SK-N-SH (cell line): ENCODE measurements at regions of chr4 and their contacts with region 1.

Region 1: GRCh38 chr4:57460967-57461366 is 350.8 kb upstream of the IGFBP7 start:
- DNase-seq: no peak
- H3K4me3 ChIP-seq: no peak overlapping the region
- H3K27ac ChIP-seq: no peak overlapping the region
- H3K4me1 ChIP-seq: no peaks in the 10 kb centered on the region
- H3K27me3 ChIP-seq: no peaks in the 10 kb centered on the region
- CTCF ChIP-seq: no peak
- EP300 ChIP-seq: no peak
- RAD21 ChIP-seq: no peak

Region 2: GRCh38 chr4:57254754-57255153 is 206.2 kb before region 1 on chr4:
- CTCF ChIA-PET with region 1: no interaction called
- POLR2A ChIA-PET with region 1: no interaction called
- DNase-seq: no peak
- H3K4me3 ChIP-seq: no peak overlapping the region
- H3K27ac ChIP-seq: no peak overlapping the region
- H3K4me1 ChIP-seq: no peaks in the 10 kb centered on the region
- H3K27me3 ChIP-seq: no peaks in the 10 kb centered on the region
- CTCF ChIP-seq: no peak
- EP300 ChIP-seq: no peak
- RAD21 ChIP-seq: no peak

Region 3: DNA sequence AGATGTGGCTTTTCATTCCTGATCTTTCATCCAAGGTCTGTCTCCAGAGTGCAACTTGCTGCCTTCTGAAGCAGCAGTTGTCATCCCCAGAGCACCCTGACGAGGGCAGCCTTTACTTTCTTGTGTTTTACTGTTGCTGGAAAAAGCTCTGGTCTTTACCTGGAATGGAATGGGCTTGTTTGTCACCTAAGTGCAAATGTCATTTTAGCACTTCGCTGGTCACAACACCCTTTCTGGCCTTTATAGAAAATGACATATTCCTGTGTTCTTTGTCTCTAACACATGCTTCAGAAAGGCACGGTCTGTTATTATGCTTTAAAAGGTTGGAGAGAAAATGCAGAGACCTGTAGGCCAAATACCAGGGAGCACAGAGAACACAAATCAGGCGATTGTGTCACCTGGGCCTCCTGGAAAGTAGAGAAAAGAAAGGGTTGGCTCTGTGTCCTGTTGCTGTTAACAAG is 18.1 kb before region 1 on chr4:
- CTCF ChIA-PET with region 1: interaction called, 15 read pairs
- POLR2A ChIA-PET with region 1: no interaction called
- DNase-seq: peak; percentile 54
- H3K4me3 ChIP-seq: peak overlapping the region in 1 of 2 experiments; percentile 46; a peak in 1 of 4 replicates
- H3K27ac ChIP-seq: no peak overlapping the region
- H3K4me1 ChIP-seq: no peaks in the 10 kb centered on the region
- H3K27me3 ChIP-seq: no peaks in the 10 kb centered on the region
- CTCF ChIP-seq: peak; percentile 78
- EP300 ChIP-seq: no peak
- RAD21 ChIP-seq: peak; percentile 93